ENCODE measurements at regions of chr10 and their contacts with region 1.

Region 1: GRCh38 chr10:95308389-95309302 is 17.8 kb upstream of the PDLIM1 start:
- DNase-seq: peak; percentile 98
- ATAC-seq: peak; percentile 91
- H3K4me3 ChIP-seq: no peak overlapping the region; the same call in 1 of the 2 replicates
- H3K27ac ChIP-seq: peak overlapping the region; percentile 80
- H3K4me1 ChIP-seq: peaks cover 13% of the 10 kb centered on the region
- H3K27me3 ChIP-seq: no peaks in the 10 kb centered on the region
- CTCF ChIP-seq: no peak
- POLR2A ChIP-seq: no peak; the same call in 1 of the 2 replicates
- RAD21 ChIP-seq: peak; percentile 29

Region 2: GRCh38 chr10:95327367-95327766 is 18.7 kb after region 1 on chr10:
- CTCF ChIA-PET with region 1: interaction called, 3 read pairs
- POLR2A ChIA-PET with region 1: no interaction called
- dilution Hi-C with region 1: no loop called
- in situ Hi-C with region 1: no loop called
- intact Hi-C with region 1: loop called (anchors 2 kb)
- DNase-seq: peak; percentile 66
- ATAC-seq: no peak
- H3K4me3 ChIP-seq: no peak overlapping the region
- H3K27ac ChIP-seq: peak overlapping the region; percentile 85
- H3K4me1 ChIP-seq: peaks cover 40% of the 10 kb centered on the region
- H3K27me3 ChIP-seq: no peaks in the 10 kb centered on the region
- CTCF ChIP-seq: no peak
- POLR2A ChIP-seq: no peak
- RAD21 ChIP-seq: no peak

Region 3: DNA sequence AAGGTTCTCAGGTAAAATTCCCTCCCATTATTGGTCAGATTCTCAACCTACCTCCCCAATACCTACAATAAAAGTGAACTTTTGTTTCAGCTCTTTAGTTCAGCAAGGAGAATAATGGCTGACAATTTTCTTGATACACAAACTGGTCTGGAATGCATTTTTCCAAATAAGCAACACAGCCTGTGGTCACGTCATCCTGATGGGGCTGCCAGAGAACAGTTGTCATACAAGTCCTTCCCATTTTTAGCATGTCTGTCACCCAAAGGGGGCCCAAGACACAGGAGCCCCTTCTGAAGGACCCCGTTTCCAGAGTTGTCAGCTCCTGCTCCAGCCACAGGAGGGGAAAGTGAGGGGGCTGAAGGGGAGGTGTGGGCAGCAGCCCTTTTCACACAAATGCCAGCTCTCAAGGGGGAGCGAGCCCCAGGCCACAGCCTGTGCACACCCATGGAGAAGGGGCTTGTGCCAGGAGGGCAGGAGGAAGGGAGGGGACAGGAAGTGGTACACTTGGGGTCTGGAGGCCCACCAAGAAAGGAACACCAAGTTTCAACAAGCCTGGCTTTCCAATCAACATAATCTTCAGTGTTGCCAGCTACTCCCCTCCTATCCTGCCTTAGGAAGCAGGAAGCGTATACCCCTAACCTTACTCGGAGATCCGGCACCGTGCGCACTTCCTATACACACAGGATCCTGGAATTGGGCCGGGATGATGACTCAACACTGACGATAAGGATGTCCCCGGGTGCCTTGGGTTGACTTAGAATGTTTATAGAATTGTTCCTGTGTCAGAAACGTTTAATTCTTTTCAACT is 25.6 kb after region 1 on chr10:
- CTCF ChIA-PET with region 1: no interaction called
- POLR2A ChIA-PET with region 1: no interaction called
- dilution Hi-C with region 1: no loop called
- in situ Hi-C with region 1: no loop called
- intact Hi-C with region 1: loop called (anchors 1 kb)
- DNase-seq: peak; percentile 98
- ATAC-seq: peak; percentile 93
- H3K4me3 ChIP-seq: no peak overlapping the region
- H3K27ac ChIP-seq: peak overlapping the region; percentile 99
- H3K4me1 ChIP-seq: peaks cover 32% of the 10 kb centered on the region
- H3K27me3 ChIP-seq: no peaks in the 10 kb centered on the region
- CTCF ChIP-seq: no peak
- POLR2A ChIP-seq: 0 out of 2 replicates have a peak, but pooled peaks have one; percentile 13
- RAD21 ChIP-seq: no peak